AG04450 (cell line): ENCODE measurements at regions of chr2 and their contacts with region 1.

Region 1: DNA sequence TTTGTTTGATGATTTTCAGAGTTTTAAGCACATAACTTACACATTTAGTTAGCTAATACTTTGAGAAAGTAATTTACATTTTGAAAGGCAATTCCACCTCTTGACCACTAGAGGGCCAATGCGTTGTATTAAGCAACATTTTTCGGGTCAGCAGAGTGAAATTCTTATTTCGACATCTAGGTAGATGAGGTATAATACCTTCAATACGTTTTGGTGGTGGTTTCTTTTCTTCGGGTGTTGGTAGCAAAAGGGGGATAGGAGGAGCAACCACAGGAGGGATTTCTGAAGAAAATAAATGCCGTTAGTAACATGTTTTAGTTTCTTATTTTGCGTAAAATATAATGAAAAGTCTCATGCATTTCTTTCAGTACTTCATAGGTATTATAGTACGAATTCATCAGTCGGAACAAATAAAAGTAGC is 106.3 kb downstream of the TTN start:
- DNase-seq: no peak
- H3K4me3 ChIP-seq: no peak overlapping the region
- H3K27ac ChIP-seq: no peak overlapping the region
- H3K27me3 ChIP-seq: no peaks in the 10 kb centered on the region
- CTCF ChIP-seq: peak; percentile 94

Region 2: DNA sequence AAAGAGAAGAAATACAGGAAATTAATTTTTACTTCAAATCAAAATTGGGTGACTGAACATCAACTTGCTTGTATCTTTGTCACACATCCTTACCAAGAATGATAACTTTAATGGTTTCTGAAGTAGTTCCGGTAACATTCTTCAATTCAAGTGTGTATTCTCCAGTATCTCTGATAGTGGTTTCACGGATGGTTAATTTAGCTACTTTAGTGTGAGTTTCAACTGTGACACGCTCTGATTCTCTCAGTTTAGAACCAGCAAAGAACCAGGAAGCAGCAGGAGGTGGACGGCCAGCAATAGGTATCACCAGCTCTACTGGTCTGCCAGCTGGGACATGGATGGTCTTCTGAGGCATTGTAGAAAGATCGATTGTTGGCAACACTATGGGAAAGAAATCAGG is 158.4 kb before region 1 on chr2:
- CTCF ChIA-PET with region 1: no interaction called
- POLR2A ChIA-PET with region 1: no interaction called
- DNase-seq: no peak
- H3K4me3 ChIP-seq: no peak overlapping the region
- H3K27ac ChIP-seq: no peak overlapping the region
- H3K27me3 ChIP-seq: no peaks in the 10 kb centered on the region
- CTCF ChIP-seq: no peak

Region 3: GRCh38 chr2:178679891-178680290 is 21.0 kb before region 1 on chr2:
- CTCF ChIA-PET with region 1: interaction called, 18 read pairs
- POLR2A ChIA-PET with region 1: no interaction called
- DNase-seq: no peak
- H3K4me3 ChIP-seq: no peak overlapping the region
- H3K27ac ChIP-seq: no peak overlapping the region
- H3K27me3 ChIP-seq: no peaks in the 10 kb centered on the region
- CTCF ChIP-seq: no peak

Region 4: GRCh38 chr2:178718283-178718682 is 17.4 kb after region 1 on chr2:
- CTCF ChIA-PET with region 1: interaction called, 18 read pairs
- POLR2A ChIA-PET with region 1: no interaction called
- DNase-seq: no peak
- H3K4me3 ChIP-seq: no peak overlapping the region
- H3K27ac ChIP-seq: no peak overlapping the region
- H3K27me3 ChIP-seq: no peaks in the 10 kb centered on the region
- CTCF ChIP-seq: no peak